Activated T-helper 2 cell treated with anti-CD3 and anti-CD28 coated beads, Interferon-gamma antibody, Interleukin-2, Interleukin-4, amounts not matched to agents 10 μg/mL and 5 μg/mL and 100 μg/mL, durations not matched to agents 14 hours and 24 hours and 36 hours (primary cell): ENCODE measurements at regions of chr13 and their contacts with region 1.

Region 1: GRCh38 chr13:99995589-99996380 is 14.2 kb downstream of the ZIC2 start:
- DNase-seq: no peak
- H3K4me3 Mint-ChIP-seq: no peak overlapping the region
- H3K27ac Mint-ChIP-seq: peak overlapping the region; percentile 17
- H3K4me1 Mint-ChIP-seq: peaks cover 12% of the 10 kb centered on the region
- H3K27me3 Mint-ChIP-seq: peaks cover 75% of the 10 kb centered on the region

Region 2: DNA sequence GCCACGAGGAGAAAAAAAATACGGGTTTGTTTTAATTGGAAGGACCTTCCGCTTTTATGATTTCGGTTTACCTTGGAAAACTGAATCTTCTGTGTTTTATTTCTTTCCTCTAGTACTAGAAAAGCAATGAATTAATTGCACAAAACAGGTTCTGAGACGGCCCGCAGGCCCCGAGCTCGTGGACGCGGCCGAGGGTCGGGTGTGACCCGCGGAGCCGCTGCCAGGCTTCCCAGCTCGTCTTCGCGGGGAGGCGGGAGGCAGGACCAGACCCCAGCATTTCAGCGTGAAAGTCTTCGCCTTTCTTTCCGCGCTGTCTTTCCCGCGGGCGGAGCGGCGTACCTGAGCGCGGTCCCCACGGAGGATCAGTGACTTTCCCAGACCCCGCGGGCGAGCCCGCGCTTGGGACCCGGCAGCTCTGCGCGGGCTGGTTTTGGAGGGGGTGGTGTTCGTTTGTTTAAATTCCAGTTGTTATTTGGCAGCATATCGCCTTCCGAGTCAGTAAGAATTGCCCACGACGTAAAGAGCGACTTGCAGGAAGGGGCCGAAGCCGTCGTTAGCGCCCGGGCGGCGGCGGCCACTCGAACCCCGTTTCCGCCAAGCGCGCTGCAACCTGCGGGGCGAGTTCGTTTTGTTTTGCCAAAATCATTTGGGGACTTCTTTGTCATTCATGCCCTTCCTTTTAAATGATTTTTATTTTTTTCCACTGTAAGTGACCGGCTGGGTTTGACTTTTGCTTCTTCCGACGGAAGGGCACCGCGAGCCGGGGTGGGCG is 100.4 kb before region 1 on chr13:
- intact Hi-C with region 1: loop called (anchors 5 kb)
- DNase-seq: no peak
- H3K4me3 Mint-ChIP-seq: peak overlapping the region; percentile 55
- H3K27ac Mint-ChIP-seq: no peak overlapping the region
- H3K4me1 Mint-ChIP-seq: peaks cover 4% of the 10 kb centered on the region
- H3K27me3 Mint-ChIP-seq: peaks cover 65% of the 10 kb centered on the region

Region 3: GRCh38 chr13:99959538-99960230 is 36.1 kb before region 1 on chr13:
- intact Hi-C with region 1: loop called (anchors 1 kb)
- DNase-seq: no peak
- H3K4me3 Mint-ChIP-seq: no peak overlapping the region
- H3K27ac Mint-ChIP-seq: no peak overlapping the region
- H3K4me1 Mint-ChIP-seq: no peaks in the 10 kb centered on the region
- H3K27me3 Mint-ChIP-seq: peaks cover 78% of the 10 kb centered on the region

Region 4: GRCh38 chr13:100156788-100157187 is 161.0 kb after region 1 on chr13:
- intact Hi-C with region 1: no loop called
- DNase-seq: no peak
- H3K4me3 Mint-ChIP-seq: no peak overlapping the region
- H3K27ac Mint-ChIP-seq: no peak overlapping the region
- H3K4me1 Mint-ChIP-seq: peaks cover 10% of the 10 kb centered on the region
- H3K27me3 Mint-ChIP-seq: no peaks in the 10 kb centered on the region

Region 5: GRCh38 chr13:100514788-100515409 is 519.1 kb after region 1 on chr13:
- intact Hi-C with region 1: loop called (anchors 5 kb)
- DNase-seq: peak; percentile 51
- H3K4me3 Mint-ChIP-seq: no peak overlapping the region
- H3K27ac Mint-ChIP-seq: no peak overlapping the region
- H3K4me1 Mint-ChIP-seq: peaks cover 19% of the 10 kb centered on the region
- H3K27me3 Mint-ChIP-seq: peaks cover 35% of the 10 kb centered on the region